HEK293 (cell line): ENCODE measurements at regions of chr1 and their contacts with region 1.

Region 1: GRCh38 chr1:242454262-242455045 is 70.0 kb downstream of the PLD5 start:
- H3K4me3 ChIP-seq: no peak overlapping the region
- H3K27ac ChIP-seq: no peak overlapping the region
- H3K4me1 ChIP-seq: no peaks in the 10 kb centered on the region
- CTCF ChIP-seq: peak; percentile 37

Region 2: GRCh38 chr1:242467556-242468145 is 13.2 kb after region 1 on chr1:
- CTCF ChIA-PET with region 1: interaction called, 20 read pairs
- POLR2A ChIA-PET with region 1: no interaction called
- H3K4me3 ChIP-seq: no peak overlapping the region
- H3K27ac ChIP-seq: no peak overlapping the region
- H3K4me1 ChIP-seq: no peaks in the 10 kb centered on the region
- CTCF ChIP-seq: peak; percentile 52; the same call in 1 of the 2 replicates

Region 3: DNA sequence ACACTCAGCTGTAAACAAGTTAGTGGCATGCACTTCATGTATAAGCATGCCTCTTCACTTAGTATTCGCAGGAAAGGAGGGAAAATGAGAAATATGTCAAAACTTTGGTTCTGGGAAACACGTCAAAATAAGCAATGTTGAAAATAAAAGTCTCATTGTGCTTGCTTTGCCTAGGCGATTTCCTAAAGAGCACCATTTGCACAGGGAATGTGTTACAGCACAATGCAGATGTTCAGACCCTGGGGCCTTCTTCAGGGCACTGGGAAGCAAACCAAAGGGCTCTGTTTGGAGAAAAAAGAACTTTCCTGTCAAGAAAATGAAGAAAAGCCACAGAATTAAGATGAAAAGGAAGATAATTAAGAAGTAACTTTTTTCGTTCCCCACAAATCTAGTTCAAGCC is 168.7 kb after region 1 on chr1:
- CTCF ChIA-PET with region 1: no interaction called
- POLR2A ChIA-PET with region 1: no interaction called
- H3K4me3 ChIP-seq: no peak overlapping the region
- H3K27ac ChIP-seq: no peak overlapping the region
- H3K4me1 ChIP-seq: no peaks in the 10 kb centered on the region
- CTCF ChIP-seq: no peak

Region 4: GRCh38 chr1:243323491-243323890 is 869.0 kb after region 1 on chr1:
- CTCF ChIA-PET with region 1: interaction called, 11 read pairs
- POLR2A ChIA-PET with region 1: no interaction called
- H3K4me3 ChIP-seq: no peak overlapping the region
- H3K27ac ChIP-seq: no peak overlapping the region
- H3K4me1 ChIP-seq: no peaks in the 10 kb centered on the region
- CTCF ChIP-seq: no peak